ENCODE measurements at regions of chr2 and their contacts with region 1.

Region 1: GRCh38 chr2:88059979-88060906 is 4.7 kb upstream of the KRCC1 start:
- DNase-seq: peak; percentile 66
- CTCF ChIP-seq: peak; percentile 72

Region 2: GRCh38 chr2:88038263-88039105 is 21.8 kb before region 1 on chr2:
- CTCF ChIA-PET with region 1: interaction called, 14 read pairs
- POLR2A ChIA-PET with region 1: no interaction called
- DNase-seq: no peak
- CTCF ChIP-seq: no peak

Region 3: DNA sequence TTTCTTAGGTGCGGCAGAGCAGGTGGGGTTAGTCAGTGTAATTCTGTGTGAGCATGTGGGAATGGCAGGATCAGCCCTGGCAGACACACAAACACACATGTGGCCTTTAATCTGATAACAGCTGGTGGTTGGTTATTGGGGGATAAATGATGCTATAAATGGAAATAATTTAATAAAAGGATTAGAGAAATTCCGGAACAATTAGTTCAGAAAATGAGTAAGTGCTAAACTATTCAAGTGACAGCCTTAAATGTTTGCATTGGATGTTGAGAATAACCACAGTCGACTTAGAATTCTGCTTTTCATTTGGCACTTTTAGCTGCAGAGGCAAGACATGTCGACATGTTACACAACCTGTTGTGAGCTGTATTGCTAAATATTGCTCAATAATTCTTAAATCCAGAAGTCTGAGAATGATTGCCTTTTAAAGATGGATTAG is 14.6 kb after region 1 on chr2:
- CTCF ChIA-PET with region 1: interaction called, 32 read pairs
- POLR2A ChIA-PET with region 1: no interaction called
- DNase-seq: no peak
- CTCF ChIP-seq: no peak

Region 4: DNA sequence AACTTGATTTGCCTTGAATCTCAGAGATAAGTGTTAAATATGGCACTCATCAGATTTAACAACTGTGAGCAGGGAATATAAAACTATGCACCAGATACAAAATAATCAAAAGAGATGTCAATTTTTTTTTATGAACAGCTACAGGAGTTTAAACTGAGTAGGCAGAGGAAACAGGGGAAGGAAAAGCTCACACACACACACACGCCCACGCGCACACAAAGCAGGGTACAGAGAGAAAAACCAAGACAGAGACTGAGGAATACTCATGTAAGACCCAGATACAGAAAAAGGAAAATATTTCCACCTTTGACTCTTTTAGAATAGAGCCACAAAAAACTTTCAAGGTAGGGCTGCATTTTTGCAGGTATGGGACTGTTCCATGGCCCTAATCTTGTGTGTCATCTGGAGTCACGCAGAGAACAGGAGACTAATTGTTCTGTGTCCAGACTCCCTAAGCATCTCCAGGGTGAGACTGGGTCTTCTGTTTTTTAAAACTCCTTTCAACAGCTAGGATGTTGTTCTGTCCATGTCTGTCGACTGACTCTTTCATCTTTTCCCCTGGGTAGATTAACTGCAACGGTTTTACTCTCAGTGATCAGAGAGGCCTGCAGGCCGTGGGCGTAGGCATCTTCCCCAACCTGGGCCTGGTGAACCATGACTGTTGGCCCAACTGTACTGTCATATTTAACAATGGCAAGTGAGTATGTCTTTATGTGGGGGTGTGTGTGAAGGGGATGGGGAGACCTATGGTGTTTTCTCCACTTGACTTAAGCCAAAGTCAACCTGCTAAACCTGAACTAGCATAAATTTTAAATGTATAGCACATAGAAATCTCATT is 30.4 kb after region 1 on chr2:
- CTCF ChIA-PET with region 1: interaction called, 12 read pairs
- POLR2A ChIA-PET with region 1: no interaction called
- DNase-seq: no peak
- CTCF ChIP-seq: no peak

Region 5: DNA sequence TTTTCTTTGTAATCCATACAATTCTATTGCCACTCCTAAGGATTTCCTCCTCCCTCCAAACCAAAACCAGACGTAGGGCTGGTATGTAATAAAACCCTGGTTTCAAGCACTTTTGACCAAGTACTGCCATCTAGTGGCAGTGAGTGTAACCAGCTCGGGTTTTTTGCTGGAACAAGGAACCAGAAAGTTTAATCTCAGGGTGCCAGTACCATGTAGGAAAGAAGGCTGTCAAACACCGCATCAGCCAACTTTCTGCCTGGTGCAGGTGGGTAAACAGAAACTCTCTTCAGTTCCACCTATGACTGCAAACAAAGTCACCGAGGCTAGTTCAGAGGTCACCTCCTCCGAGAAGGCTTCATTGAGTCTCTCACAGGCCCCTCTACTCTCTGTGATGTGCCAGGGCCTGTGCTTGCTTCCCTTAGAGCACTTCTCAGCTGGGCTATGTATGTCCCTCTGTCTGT is 99.7 kb after region 1 on chr2:
- CTCF ChIA-PET with region 1: interaction called, 111 read pairs
- POLR2A ChIA-PET with region 1: interaction called, 4 read pairs
- DNase-seq: peak; percentile 57
- CTCF ChIP-seq: peak; percentile 73